ENCODE measurements at regions of chr3 and their contacts with region 1.

Region 1: GRCh38 chr3:101573449-101574387 is at the start of gene PCNP:
- DNase-seq: peak; percentile 95 to 99 (median 98)
- ATAC-seq: peak; percentile 91
- H3K4me3 ChIP-seq: peak within 1 kb of the TSS; percentile 89
- H3K4me3 Mint-ChIP-seq: peak within 1 kb of the TSS; percentile 91 to 100 (median 95)
- H3K27ac ChIP-seq: peak within 1 kb of the TSS; percentile 95
- H3K27ac Mint-ChIP-seq: peak within 1 kb of the TSS; percentile 92 to 99 (median 98)
- H3K4me1 ChIP-seq: peaks cover 33 to 52% of the 10 kb centered on the region in 2 donors
- H3K4me1 Mint-ChIP-seq: peaks cover 31 to 85% (median 72%) of the 10 kb centered on the region in 7 donors
- H3K27me3 ChIP-seq: no peaks in the 10 kb centered on the region
- H3K27me3 Mint-ChIP-seq: peaks cover 0 to 2% (median 0%) of the 10 kb centered on the region in 5 donors
- total RNA-seq, gene PCNP: 129 to 172 (median 160) TPM

Region 2: DNA sequence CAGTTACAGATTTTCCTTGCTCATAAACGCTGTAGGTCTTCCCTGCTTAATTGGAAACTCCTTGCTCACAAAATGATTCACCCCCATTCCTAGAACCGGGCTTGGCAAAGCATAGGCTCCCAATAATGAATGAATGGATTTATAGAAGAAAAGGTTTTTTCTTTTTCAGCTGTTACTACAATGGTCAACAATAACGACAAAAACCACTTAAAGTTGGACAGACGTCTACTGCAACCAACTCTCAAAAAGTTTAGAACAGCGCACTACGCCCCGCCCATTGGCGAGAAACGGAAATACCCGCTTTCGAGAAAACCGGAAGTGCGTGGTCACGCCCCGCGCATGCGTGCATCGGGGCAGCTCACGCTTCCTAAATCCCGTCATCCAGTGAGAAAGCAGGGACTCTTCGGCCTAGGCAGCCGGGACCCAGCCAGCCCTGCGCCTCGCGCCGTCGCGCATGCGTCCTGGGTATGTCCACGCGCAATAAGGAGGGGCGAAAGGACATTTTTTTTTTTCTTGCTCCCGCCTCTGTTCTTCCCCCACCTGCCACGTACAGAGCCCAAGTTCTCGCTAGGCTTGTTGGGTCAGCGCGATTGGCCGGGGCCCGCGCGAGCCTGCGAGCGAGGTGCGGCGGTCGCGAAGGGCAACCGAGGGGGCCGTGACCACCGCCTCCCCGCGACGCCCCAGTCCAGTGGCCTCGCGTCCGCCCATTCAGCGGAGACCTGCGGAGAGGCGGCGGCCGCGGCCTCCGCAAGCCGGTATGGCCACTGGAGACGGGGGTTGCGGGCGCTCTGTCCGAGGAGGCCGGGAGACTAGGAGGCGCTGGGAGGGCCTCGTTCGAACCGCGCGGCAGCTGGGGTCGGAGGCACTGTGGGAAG is 864.5 kb before region 1 on chr3 and contains the start of gene TFG:
- CTCF ChIA-PET with region 1: no interaction called
- POLR2A ChIA-PET with region 1: no interaction called
- intact Hi-C with region 1: loop called (anchors 1 kb)
- DNase-seq: peak; percentile 94 to 98 (median 96)
- ATAC-seq: peak; percentile 95
- H3K4me3 ChIP-seq: peak within 1 kb of the TSS; percentile 68
- H3K4me3 Mint-ChIP-seq: peak within 1 kb of the TSS; percentile 85 to 98 (median 94)
- H3K27ac ChIP-seq: peak within 1 kb of the TSS; percentile 90
- H3K27ac Mint-ChIP-seq: peak within 1 kb of the TSS; percentile 95 to 99 (median 98)
- H3K4me1 ChIP-seq: peaks cover 19 to 21% of the 10 kb centered on the region in 2 donors
- H3K4me1 Mint-ChIP-seq: peaks cover 32 to 50% (median 47%) of the 10 kb centered on the region in 7 donors
- H3K27me3 ChIP-seq: no peaks in the 10 kb centered on the region
- H3K27me3 Mint-ChIP-seq: peaks cover 0 to 14% (median 6%) of the 10 kb centered on the region in 5 donors
- total RNA-seq, gene TFG: 40.8 to 72.2 (median 45.6) TPM

Region 3: DNA sequence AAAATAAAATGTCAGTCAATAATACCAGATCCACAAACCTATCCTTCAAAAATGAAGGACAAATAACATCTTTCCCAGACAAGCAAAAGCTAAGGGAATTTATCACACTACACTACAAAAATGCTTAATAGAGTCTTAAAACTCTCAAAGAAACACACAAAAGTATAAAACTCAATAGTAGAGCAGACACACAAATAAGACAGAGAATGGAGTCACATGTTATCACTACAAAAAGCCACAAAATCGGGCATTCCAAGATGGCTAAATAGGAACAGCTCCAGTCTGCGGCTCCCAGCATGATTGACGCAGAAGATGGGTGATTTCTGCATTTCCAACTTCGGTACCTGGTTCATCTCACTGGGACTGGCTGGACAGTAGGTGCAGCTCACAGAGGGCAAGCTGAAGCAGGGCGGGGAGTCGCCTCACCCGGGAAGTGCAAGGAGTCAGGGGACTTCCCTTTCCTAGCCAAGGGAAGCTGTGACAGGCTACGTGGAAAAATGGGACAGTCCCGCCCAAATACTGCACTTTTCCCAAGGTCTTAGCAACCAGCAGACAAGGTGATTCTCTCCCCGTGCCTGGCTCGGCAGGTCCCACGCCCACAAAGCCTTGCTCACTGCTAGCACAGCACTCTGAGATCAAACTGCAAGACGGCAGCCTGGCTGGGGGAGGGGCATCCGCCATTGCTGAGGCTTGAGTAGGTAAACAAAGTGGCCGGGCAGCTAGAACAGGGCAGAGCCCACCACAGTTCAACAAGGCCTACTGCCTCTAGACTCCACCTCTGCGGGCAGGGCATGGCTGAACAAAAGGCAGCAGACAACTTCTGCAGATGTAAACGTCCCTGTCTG is 107.0 kb before region 1 on chr3:
- CTCF ChIA-PET with region 1: no interaction called
- POLR2A ChIA-PET with region 1: interaction called, 5 read pairs
- intact Hi-C with region 1: loop called in 1 of 2 experiments (anchors 1 kb)
- DNase-seq: peak in 8 of 9 donors; percentile 38 to 82 (median 58)
- ATAC-seq: peak; percentile 67
- H3K4me3 ChIP-seq: no peak overlapping the region
- H3K4me3 Mint-ChIP-seq: peak overlapping the region in 8 of 10 donors; percentile 4 to 86 (median 76)
- H3K27ac ChIP-seq: peak overlapping the region; percentile 63
- H3K27ac Mint-ChIP-seq: peak overlapping the region in 8 of 9 donors; percentile 52 to 96 (median 89)
- H3K4me1 ChIP-seq: peaks cover 3 to 17% of the 10 kb centered on the region in 2 donors
- H3K4me1 Mint-ChIP-seq: peaks cover 38 to 81% (median 72%) of the 10 kb centered on the region in 7 donors
- H3K27me3 ChIP-seq: no peaks in the 10 kb centered on the region
- H3K27me3 Mint-ChIP-seq: no peaks in the 10 kb centered on the region

Region 4: GRCh38 chr3:101544161-101544850 is 29.4 kb before region 1 on chr3:
- CTCF ChIA-PET with region 1: no interaction called
- POLR2A ChIA-PET with region 1: interaction called, 12 read pairs
- intact Hi-C with region 1: loop called in 1 of 2 experiments (anchors 1 kb)
- DNase-seq: peak in 1 of 9 donors; percentile 10
- ATAC-seq: no peak
- H3K4me3 ChIP-seq: no peak overlapping the region
- H3K4me3 Mint-ChIP-seq: peak overlapping the region in 9 of 10 donors; percentile 1 to 77 (median 36)
- H3K27ac ChIP-seq: peak overlapping the region; percentile 20
- H3K27ac Mint-ChIP-seq: peak overlapping the region; percentile 51 to 95 (median 89)
- H3K4me1 ChIP-seq: peaks cover 20 to 25% of the 10 kb centered on the region in 2 donors
- H3K4me1 Mint-ChIP-seq: peaks cover 17 to 40% (median 31%) of the 10 kb centered on the region in 7 donors
- H3K27me3 ChIP-seq: no peaks in the 10 kb centered on the region
- H3K27me3 Mint-ChIP-seq: no peaks in the 10 kb centered on the region

Region 5: GRCh38 chr3:101676765-101677435 is 103.2 kb after region 1 on chr3 and contains the start of gene ZBTB11:
- CTCF ChIA-PET with region 1: no interaction called
- POLR2A ChIA-PET with region 1: interaction called, 20 read pairs
- intact Hi-C with region 1: loop called (anchors 1 kb)
- DNase-seq: peak; percentile 98 to 100 (median 99)
- ATAC-seq: peak; percentile 80
- H3K4me3 ChIP-seq: peak within 1 kb of the TSS; percentile 91
- H3K4me3 Mint-ChIP-seq: peak within 1 kb of the TSS; percentile 87 to 97 (median 93)
- H3K27ac ChIP-seq: peak within 1 kb of the TSS; percentile 98
- H3K27ac Mint-ChIP-seq: peak within 1 kb of the TSS; percentile 93 to 100 (median 97)
- H3K4me1 ChIP-seq: peaks cover 23 to 26% of the 10 kb centered on the region in 2 donors
- H3K4me1 Mint-ChIP-seq: peaks cover 19 to 63% (median 54%) of the 10 kb centered on the region in 7 donors
- H3K27me3 ChIP-seq: no peaks in the 10 kb centered on the region
- H3K27me3 Mint-ChIP-seq: no peaks in the 10 kb centered on the region
- total RNA-seq, gene ZBTB11: 31.9 to 68.2 (median 54.2) TPM

Region 6: DNA sequence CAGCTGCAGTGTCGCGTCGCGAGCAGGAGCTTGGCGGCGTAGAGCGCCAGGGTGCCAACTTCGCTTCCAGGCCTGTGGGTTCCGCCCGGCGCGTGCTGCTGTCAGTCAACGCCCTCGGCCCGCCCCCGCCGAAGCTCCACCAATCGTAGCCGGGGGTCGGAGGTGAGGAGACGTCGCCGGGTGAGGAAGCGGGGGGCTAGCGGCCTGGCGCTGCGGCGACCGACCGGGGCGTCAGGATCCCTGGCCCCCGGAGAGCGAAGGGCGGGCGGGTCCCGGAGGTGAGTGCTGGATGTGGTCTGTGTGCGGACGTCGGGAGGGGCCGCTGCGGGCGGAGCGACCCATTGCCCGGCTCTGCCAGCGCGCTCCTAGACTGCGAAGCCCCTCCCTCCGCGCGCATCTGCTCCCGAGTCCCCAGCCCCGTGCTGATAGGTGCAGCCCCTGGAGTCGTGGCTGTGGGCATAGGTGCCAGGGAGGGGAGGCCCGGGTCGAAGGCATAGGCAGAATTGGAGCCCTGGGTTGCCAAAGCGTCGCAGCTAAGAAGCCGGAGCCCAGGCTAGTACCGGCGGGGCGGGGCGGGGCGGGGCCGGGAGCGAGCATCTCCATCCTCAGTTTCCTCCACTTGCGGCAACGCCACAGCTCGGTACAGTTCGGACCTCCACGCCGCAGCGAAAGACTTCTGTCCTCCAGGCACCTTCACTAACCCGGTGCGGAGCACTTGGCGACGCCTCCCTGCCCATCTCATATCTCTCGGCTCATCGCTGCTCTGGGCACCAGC is 205.5 kb after region 1 on chr3 and contains the start of gene NXPE3:
- CTCF ChIA-PET with region 1: no interaction called
- POLR2A ChIA-PET with region 1: interaction called, 5 read pairs
- intact Hi-C with region 1: loop called (anchors 1 kb)
- DNase-seq: peak; percentile 92 to 97 (median 94)
- ATAC-seq: peak; percentile 95
- H3K4me3 ChIP-seq: peak within 1 kb of the TSS; percentile 60
- H3K4me3 Mint-ChIP-seq: peak within 1 kb of the TSS; percentile 89 to 99 (median 94)
- H3K27ac ChIP-seq: peak within 1 kb of the TSS; percentile 88
- H3K27ac Mint-ChIP-seq: peak within 1 kb of the TSS; percentile 93 to 100 (median 99)
- H3K4me1 ChIP-seq: peaks cover 27% of the 10 kb centered on the region in 2 donors
- H3K4me1 Mint-ChIP-seq: peaks cover 20 to 61% (median 53%) of the 10 kb centered on the region in 7 donors
- H3K27me3 ChIP-seq: no peaks in the 10 kb centered on the region
- H3K27me3 Mint-ChIP-seq: no peaks in the 10 kb centered on the region
- total RNA-seq, gene NXPE3: 25.9 to 48.7 (median 35.5) TPM

Region 7: DNA sequence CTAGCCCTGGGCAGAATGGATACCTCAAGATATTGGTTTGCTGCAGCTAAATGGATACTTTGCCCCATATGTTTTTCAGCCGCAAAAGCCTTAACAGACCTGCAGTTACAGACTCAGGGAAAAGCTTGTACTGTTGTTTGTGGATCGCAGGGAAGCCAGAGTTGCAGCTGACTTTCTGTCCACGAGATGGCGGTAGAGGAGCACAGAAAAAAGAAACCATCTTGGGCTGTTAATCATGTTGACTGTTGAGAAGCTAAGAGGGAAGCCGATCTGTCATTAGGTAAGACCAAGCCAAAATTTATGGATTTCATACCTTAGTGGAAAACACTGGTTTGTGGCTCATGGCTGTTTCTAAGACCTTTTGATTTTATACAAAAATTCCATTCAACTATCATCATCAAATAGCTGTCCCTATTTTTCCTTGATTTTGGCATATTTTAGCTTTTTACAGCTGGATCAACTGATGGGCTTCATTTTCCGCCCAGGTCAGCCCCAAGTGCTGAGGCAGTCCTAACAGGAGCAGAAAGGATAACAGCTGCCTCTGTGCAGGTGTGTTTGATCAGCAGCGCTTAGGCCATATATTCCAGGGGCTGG is 655.4 kb after region 1 on chr3:
- CTCF ChIA-PET with region 1: no interaction called
- POLR2A ChIA-PET with region 1: no interaction called
- intact Hi-C with region 1: loop called in 1 of 2 experiments (anchors 10 kb)
- DNase-seq: peak; percentile 49 to 80 (median 74)
- ATAC-seq: peak; percentile 89
- H3K4me3 ChIP-seq: no peak overlapping the region
- H3K4me3 Mint-ChIP-seq: no peak overlapping the region
- H3K27ac ChIP-seq: no peak overlapping the region
- H3K27ac Mint-ChIP-seq: no peak overlapping the region
- H3K4me1 ChIP-seq: peaks cover 0 to 6% of the 10 kb centered on the region in 2 donors
- H3K4me1 Mint-ChIP-seq: peaks cover 1 to 27% (median 14%) of the 10 kb centered on the region in 7 donors
- H3K27me3 ChIP-seq: no peaks in the 10 kb centered on the region
- H3K27me3 Mint-ChIP-seq: peaks cover 0 to 25% (median 0%) of the 10 kb centered on the region in 5 donors

Measured in naive thymus-derived CD4-positive, alpha-beta T cell (primary cell).